Activated CD8-positive, alpha-beta T cell treated with anti-CD3 and anti-CD28 coated beads, Interleukin-2, amount 10 ng/mL, durations not matched to agents 7 days and 5 days (primary cell): ENCODE measurements at regions of chr7 and their contacts with region 1.

Region 1: DNA sequence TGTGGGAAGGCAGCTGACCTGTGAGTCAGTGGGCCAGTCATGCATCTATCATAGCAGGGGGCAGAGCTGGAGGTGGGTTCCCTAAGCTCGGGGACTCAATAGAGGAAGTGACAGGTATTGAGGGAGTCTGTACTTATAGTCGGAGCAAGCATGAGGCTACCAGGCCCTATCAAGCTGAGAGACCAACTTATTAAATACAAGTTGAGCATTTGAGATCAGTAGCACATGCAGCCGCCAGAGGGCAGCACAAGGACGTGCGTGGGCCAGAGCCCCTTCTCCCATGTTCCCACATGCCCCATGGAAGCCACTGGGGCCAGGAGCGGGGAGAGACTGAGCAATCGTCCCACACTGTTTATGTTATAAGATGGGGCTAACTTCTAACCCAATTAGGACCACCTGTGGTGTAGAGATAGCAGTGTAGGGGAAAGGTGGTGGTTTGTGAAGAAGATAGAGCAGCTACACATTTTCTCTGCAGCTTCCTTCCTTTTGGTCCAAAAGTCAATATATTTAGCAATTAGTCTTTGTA is 13.0 kb upstream of the STK31 start:
- DNase-seq: peak; percentile 67
- ATAC-seq: peak; percentile 75
- H3K4me3 Mint-ChIP-seq: no peak overlapping the region
- H3K27ac Mint-ChIP-seq: no peak overlapping the region
- H3K4me1 Mint-ChIP-seq: no peaks in the 10 kb centered on the region
- H3K27me3 Mint-ChIP-seq: no peaks in the 10 kb centered on the region

Region 2: GRCh38 chr7:23570592-23571200 is 126.3 kb before region 1 on chr7:
- CTCF ChIA-PET with region 1: interaction called, 13 read pairs
- POLR2A ChIA-PET with region 1: no interaction called
- DNase-seq: peak; percentile 73
- ATAC-seq: peak; percentile 83
- H3K4me3 Mint-ChIP-seq: no peak overlapping the region
- H3K27ac Mint-ChIP-seq: no peak overlapping the region
- H3K4me1 Mint-ChIP-seq: no peaks in the 10 kb centered on the region
- H3K27me3 Mint-ChIP-seq: peaks cover 14% of the 10 kb centered on the region

Region 3: GRCh38 chr7:23679898-23680413 is 17.0 kb before region 1 on chr7 and contains the start of gene FAM221A:
- CTCF ChIA-PET with region 1: interaction called, 30 read pairs
- POLR2A ChIA-PET with region 1: interaction called, 3 read pairs
- DNase-seq: peak; percentile 85
- ATAC-seq: peak; percentile 98
- H3K4me3 Mint-ChIP-seq: peak within 1 kb of the TSS; percentile 92
- H3K27ac Mint-ChIP-seq: peak within 1 kb of the TSS; percentile 70
- H3K4me1 Mint-ChIP-seq: peaks cover 11% of the 10 kb centered on the region
- H3K27me3 Mint-ChIP-seq: peaks cover 6% of the 10 kb centered on the region
- total RNA-seq, gene FAM221A: 4.7 to 5.4 TPM

Region 4: GRCh38 chr7:23685731-23686130 is 11.2 kb before region 1 on chr7:
- CTCF ChIA-PET with region 1: interaction called, 30 read pairs
- POLR2A ChIA-PET with region 1: interaction called, 5 read pairs
- DNase-seq: no peak
- ATAC-seq: no peak
- H3K4me3 Mint-ChIP-seq: no peak overlapping the region
- H3K27ac Mint-ChIP-seq: no peak overlapping the region
- H3K4me1 Mint-ChIP-seq: peaks cover 1% of the 10 kb centered on the region
- H3K27me3 Mint-ChIP-seq: no peaks in the 10 kb centered on the region

Region 5: DNA sequence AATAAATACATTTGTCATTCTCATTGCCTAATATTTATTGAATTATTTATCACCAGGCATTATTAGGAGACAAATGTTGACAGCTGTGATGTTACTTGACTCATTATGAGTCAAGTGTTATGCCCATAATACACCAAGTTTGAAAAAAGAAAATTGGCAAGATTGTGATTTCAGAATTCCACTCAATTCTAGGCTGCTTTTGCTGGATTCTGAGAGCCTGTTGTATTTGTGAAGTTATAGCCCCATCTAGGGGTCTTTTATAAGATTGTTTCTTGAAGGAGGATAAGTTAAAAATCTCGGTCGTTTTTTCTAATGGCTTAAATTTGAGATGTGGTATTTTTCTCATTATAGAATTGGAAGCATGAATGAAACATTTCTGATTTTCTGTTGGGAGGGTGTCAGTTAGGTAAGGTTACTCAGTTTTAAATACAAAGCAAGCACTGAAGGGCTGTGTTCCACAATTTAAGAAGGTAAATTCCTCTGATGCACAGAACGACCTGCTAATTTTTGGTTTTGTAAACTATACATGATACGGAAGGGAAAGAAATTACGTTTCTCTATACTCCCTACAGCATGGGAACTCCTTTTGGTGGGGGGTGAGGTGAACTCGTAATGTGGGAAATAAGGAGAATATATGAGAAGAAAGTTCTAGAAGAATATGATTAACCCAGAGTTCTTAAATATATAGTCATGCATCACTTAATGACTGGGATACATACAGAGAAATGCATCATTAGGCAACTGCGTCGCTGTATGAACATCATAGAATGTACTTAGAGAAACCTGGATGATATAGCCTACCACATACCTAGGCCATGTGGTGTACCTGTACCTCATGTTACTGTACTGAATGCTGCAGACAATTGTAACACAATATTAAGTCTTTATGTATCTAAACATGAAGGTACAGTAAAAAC is 15.6 kb after region 1 on chr7:
- CTCF ChIA-PET with region 1: interaction called, 52 read pairs
- POLR2A ChIA-PET with region 1: no interaction called
- DNase-seq: no peak
- ATAC-seq: no peak
- H3K4me3 Mint-ChIP-seq: no peak overlapping the region
- H3K27ac Mint-ChIP-seq: no peak overlapping the region
- H3K4me1 Mint-ChIP-seq: no peaks in the 10 kb centered on the region
- H3K27me3 Mint-ChIP-seq: no peaks in the 10 kb centered on the region